Activated naive CD4-positive, alpha-beta T cell treated with anti-CD3 and anti-CD28 coated beads for 36 hours (primary cell): ENCODE measurements at regions of chr2 and their contacts with region 1.

Region 1: GRCh38 chr2:38709567-38710194 is 41.5 kb downstream of the SRSF7 start:
- DNase-seq: peak; percentile 80
- H3K4me3 Mint-ChIP-seq: peak overlapping the region; percentile 49
- H3K27ac Mint-ChIP-seq: peak overlapping the region; percentile 95
- H3K4me1 Mint-ChIP-seq: peaks cover 68% of the 10 kb centered on the region
- H3K27me3 Mint-ChIP-seq: no peaks in the 10 kb centered on the region

Region 2: GRCh38 chr2:38682008-38682575 is 27.6 kb before region 1 on chr2:
- CTCF ChIA-PET with region 1: interaction called, 4 read pairs
- intact Hi-C with region 1: loop called (anchors 1 kb)
- DNase-seq: no peak
- H3K4me3 Mint-ChIP-seq: no peak overlapping the region
- H3K27ac Mint-ChIP-seq: peak overlapping the region; percentile 72
- H3K4me1 Mint-ChIP-seq: peaks cover 45% of the 10 kb centered on the region
- H3K27me3 Mint-ChIP-seq: no peaks in the 10 kb centered on the region

Region 3: DNA sequence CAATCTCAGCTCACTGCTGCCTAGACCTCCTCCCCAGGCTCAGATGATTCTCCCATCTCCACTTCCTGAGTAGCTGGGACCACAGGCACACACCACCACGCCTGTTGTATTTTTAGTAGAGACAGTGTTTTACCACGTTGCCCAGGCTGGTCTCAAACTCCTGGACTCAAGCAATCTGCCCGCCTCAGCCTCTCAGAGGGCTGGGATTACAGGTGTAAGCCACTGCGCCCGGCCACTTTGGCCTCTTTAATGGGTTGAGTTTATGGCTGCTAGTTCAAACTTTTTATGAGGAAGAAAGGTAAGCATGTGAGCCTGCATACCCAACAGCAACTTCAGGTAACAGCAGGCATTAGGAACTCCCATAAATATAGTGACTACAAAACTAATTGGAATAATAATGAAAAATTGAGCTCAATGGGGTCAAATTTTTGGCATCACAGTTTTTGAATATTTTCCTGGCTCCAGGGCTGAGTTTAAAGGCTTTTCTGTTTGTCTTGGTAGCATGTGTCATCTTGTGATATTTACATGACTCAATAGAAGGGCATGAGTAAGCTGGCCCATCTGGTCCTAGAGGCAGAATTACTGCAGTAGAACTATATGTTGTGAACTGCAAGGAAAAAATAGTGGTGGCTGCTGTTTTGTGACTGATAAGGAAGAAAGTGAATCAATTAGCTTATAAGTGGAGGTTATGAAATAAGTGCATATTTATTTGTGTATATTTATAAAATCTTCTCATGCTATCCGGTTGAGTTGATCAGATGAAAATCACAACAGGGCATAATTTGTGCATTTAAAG is 19.0 kb before region 1 on chr2:
- CTCF ChIA-PET with region 1: interaction called, 4 read pairs
- intact Hi-C with region 1: loop called (anchors 1 kb)
- DNase-seq: peak; percentile 50
- H3K4me3 Mint-ChIP-seq: no peak overlapping the region
- H3K27ac Mint-ChIP-seq: peak overlapping the region; percentile 71
- H3K4me1 Mint-ChIP-seq: peaks cover 57% of the 10 kb centered on the region
- H3K27me3 Mint-ChIP-seq: no peaks in the 10 kb centered on the region

Region 4: GRCh38 chr2:38697125-38697840 is 12.4 kb before region 1 on chr2:
- CTCF ChIA-PET with region 1: interaction called, 4 read pairs
- intact Hi-C with region 1: loop called (anchors 1 kb)
- DNase-seq: peak; percentile 59
- H3K4me3 Mint-ChIP-seq: no peak overlapping the region
- H3K27ac Mint-ChIP-seq: peak overlapping the region; percentile 86
- H3K4me1 Mint-ChIP-seq: peaks cover 72% of the 10 kb centered on the region
- H3K27me3 Mint-ChIP-seq: no peaks in the 10 kb centered on the region